ENCODE measurements at regions of chr15 and their contacts with region 1.

Region 1: GRCh38 chr15:89442671-89443307 is 53.6 kb downstream of the RHCG start:
- DNase-seq: peak; percentile 70
- H3K4me3 Mint-ChIP-seq: no peak overlapping the region
- H3K27ac Mint-ChIP-seq: no peak overlapping the region
- H3K4me1 Mint-ChIP-seq: no peaks in the 10 kb centered on the region
- H3K27me3 Mint-ChIP-seq: peaks cover 25% of the 10 kb centered on the region
- CTCF ChIP-seq: peak; percentile 75

Region 2: DNA sequence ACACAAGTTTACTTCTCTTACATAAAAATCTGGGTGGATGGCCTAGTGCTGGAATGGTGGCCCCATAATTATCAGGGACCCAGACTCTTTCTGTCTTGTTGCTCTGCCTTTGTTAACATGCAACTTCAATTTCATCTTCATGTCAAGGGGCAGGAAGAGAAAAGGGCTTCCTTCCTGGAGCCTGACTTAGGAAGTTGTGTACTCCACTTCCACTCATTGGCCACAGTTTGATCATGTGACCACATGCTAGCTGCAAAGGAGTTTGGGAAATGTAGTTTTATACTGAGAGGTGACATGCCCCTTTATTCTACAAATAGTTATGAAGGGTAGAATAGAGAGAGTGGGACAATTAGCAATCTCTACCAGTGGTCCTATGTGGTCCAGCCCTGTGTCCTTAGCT is 14.3 kb after region 1 on chr15:
- CTCF ChIA-PET with region 1: interaction called, 12 read pairs
- POLR2A ChIA-PET with region 1: interaction called, 4 read pairs
- intact Hi-C with region 1: no loop called
- DNase-seq: peak; percentile 37
- H3K4me3 Mint-ChIP-seq: no peak overlapping the region
- H3K27ac Mint-ChIP-seq: no peak overlapping the region
- H3K4me1 Mint-ChIP-seq: no peaks in the 10 kb centered on the region
- H3K27me3 Mint-ChIP-seq: no peaks in the 10 kb centered on the region
- CTCF ChIP-seq: no peak

Region 3: GRCh38 chr15:89817701-89818280 is 375.0 kb after region 1 on chr15:
- CTCF ChIA-PET with region 1: no interaction called
- POLR2A ChIA-PET with region 1: no interaction called
- intact Hi-C with region 1: no loop called
- DNase-seq: no peak
- H3K4me3 Mint-ChIP-seq: no peak overlapping the region
- H3K27ac Mint-ChIP-seq: no peak overlapping the region
- H3K4me1 Mint-ChIP-seq: peaks cover 25% of the 10 kb centered on the region
- H3K27me3 Mint-ChIP-seq: no peaks in the 10 kb centered on the region
- CTCF ChIP-seq: no peak

Measured in MCF 10A (cell line).